GM10248 (cell line): ENCODE measurements at regions of chr7 and their contacts with region 1.

Region 1: DNA sequence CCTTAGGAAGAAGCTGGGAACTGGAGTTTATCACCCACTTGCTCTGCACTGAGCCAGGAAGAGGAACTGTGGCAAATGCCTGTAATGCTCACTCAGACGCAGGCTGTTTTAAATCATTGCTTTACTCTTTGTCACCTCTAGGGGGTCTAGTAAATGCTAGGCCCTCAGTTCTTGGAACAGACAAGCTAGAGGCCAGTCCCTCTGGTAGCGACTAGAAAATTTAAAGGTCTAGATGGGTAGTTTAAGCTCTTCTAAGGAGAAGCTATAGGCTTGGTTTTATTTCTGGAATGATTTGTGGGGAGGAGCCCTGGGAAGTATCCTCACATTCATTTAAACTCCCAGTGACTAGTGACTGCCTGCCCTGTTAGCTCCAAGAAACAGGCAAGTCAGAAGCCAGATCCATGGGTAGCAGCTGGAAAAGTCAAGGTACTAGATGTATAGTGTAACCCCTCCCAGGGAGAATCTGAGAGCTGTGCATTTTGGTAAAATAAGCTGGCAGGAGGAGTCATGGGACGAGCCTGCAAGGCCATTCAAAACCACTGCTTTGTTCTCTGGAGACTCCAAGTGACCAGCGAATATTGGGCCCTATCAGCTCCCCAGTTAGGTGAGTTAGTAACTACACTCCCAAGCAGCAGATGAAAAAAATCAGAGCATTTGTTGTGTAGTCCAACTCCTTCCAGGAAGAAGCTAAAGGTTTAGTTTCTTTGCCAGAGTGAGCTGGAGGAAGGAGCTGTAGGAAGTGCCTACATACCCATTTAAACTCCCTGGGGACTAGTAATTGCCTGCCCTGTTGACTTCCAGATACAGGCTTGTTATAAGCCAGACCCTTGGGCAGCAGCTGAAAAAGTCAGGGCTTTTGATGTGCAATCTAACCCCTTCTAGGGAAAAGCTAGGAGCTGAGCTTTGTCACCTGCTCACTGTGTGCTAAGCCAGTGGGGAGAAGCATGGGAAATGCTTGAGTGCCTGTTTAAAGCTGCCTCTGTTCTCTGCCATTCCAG is 68.9 kb downstream of the DYNC1I1 start:
- DNase-seq: peak; percentile 40
- CTCF ChIP-seq: peak; percentile 9

Region 2: GRCh38 chr7:95811846-95812445 is 29.3 kb before region 1 on chr7:
- CTCF ChIA-PET with region 1: interaction called, 18 read pairs
- POLR2A ChIA-PET with region 1: no interaction called
- DNase-seq: no peak
- CTCF ChIP-seq: no peak

Region 3: DNA sequence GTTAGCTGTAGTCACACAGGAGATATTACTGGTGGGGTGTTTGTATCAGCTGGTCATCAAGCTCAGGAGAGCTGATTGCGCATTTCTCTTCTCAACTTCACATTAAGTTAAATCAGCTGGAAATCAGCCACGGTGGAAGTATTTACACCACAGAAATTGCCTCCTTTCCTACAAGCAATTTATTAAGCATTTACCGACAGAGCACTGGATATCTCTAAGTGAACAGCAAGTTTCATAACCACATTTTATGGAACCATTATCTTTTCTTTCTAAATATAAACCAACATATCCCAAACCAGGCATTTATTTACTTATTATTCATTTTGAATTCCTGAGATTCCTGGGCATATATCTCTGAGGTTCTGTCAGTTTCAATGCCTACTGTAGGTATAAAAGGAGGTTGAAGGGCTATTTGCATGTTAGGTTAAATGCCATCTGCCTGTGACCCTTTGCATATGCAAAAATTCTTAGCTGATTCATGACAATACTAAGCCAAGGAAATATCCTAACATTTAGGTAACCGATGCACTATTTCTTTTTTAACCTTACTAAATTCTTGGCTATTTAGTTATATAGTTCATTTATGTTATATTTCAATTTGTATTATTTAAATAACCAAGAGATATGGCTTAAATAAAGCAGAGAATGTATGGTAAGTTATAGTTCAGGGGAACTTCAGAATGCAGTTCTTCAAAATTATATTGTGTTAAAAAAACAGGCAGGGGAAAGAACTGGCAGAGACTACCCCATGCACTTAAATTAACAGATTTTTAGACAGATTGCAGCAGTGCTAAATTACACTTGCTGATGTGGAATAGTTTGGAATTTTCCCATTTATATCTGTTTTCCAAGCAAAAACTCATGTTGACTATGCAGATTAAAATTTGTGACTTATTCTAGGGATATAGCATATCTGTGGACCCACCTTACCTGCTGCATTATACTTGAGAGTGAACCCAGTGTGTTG is 12.1 kb before region 1 on chr7:
- CTCF ChIA-PET with region 1: interaction called, 11 read pairs
- POLR2A ChIA-PET with region 1: no interaction called
- DNase-seq: no peak
- CTCF ChIP-seq: no peak